ENCODE measurements at regions of chr9 and their contacts with region 1.

Region 1: DNA sequence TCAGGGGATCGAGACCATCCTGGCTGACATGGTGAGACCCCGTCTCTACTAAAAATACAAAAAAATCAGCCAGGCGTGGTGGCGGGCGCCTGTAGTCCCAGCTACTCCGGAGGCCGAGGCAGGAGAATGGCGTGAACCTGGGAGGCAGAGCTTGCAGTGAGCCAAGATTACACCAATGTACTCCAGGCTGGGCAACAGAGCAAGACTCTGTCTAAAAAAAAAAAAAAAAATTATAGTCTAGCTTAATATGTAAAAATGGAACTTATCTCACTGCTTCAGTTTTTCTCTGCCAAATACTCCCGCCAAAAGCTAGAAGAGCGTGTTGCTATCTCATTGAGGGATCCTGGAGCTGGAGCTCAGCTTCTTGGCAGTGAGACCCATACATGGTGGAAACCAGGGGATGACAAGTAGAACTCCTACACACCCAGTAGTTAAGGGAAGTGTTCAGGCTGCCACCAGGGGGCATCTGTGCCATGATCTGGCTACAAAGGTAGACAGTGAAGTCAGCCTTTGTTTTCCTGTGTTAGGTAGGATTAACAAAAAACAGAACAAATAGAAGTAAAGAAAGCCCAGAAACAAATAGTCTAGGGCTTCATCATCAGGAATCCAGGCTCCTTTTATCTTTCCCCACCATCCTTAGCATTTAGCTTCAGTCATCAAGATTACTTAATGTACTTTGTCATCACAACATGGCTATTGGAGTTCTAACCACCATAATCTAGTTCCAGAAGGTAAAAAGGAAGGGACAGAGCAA is 33.6 kb upstream of the GLIPR2 start:
- DNase-seq: peak; percentile 36
- ATAC-seq: peak; percentile 100
- H3K4me3 ChIP-seq: no peak overlapping the region
- H3K27ac ChIP-seq: no peak overlapping the region
- H3K4me1 ChIP-seq: no peaks in the 10 kb centered on the region
- H3K27me3 ChIP-seq: no peaks in the 10 kb centered on the region; a peak in 1 of 4 replicates
- CTCF ChIP-seq: peak; percentile 89 to 92 (median 92)
- EP300 ChIP-seq: no peak
- POLR2A ChIP-seq: no peak
- RAD21 ChIP-seq: peak; percentile 92

Region 2: GRCh38 chr9:35948901-35949318 is 154.0 kb before region 1 on chr9:
- CTCF ChIA-PET with region 1: no interaction called
- POLR2A ChIA-PET with region 1: no interaction called
- RAD21 ChIA-PET with region 1: no interaction called
- SMC1A ChIA-PET with region 1: no interaction called
- in situ Hi-C with region 1: no loop called
- intact Hi-C with region 1: no loop called
- DNase-seq: no peak
- ATAC-seq: no peak
- H3K4me3 ChIP-seq: no peak overlapping the region
- H3K27ac ChIP-seq: no peak overlapping the region
- H3K4me1 ChIP-seq: no peaks in the 10 kb centered on the region
- H3K27me3 ChIP-seq: no peaks in the 10 kb centered on the region
- CTCF ChIP-seq: no peak
- EP300 ChIP-seq: no peak
- POLR2A ChIP-seq: no peak
- RAD21 ChIP-seq: no peak

Region 3: DNA sequence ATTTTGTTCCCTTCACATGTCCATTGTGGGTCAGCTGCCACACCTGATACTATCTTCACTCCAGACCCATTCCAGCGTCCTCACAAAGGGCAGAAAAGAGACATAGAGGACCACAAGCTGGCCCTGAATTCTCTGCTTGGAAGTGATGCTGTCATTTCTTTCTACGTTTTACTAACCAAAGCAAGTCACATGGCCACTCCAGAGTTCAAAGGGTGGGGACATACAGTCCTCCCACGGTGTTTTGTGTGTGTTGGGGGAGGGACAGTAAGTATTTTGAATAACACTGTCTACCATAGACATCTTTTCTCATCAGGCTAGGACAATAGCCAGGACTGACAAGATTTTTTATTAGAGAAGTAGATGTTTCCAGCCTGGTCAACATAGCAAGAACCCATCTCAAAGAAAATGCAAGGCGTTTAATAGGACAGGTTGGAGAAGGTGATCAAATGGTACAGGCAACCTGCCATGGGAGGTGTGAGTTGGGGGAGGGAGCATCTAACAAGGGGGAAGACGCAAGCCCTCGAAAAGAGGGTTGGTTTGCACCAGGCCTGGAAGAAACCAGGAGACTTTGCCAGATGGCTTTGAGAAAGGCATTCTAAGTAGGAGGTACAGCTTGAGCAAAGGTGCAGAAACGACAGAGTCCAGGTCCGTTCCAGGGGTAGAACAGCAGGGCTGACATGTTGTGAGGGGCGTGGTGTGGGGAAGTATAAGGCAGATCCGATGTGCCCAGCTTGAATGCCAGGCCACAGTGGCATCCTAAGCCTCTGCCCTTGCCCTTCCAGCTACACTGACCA is 22.3 kb after region 1 on chr9:
- CTCF ChIA-PET with region 1: interaction called, 88 read pairs
- POLR2A ChIA-PET with region 1: no interaction called
- RAD21 ChIA-PET with region 1: no interaction called
- SMC1A ChIA-PET with region 1: interaction called, 3 read pairs
- in situ Hi-C with region 1: no loop called
- intact Hi-C with region 1: no loop called
- DNase-seq: no peak
- ATAC-seq: no peak
- H3K4me3 ChIP-seq: no peak overlapping the region
- H3K27ac ChIP-seq: no peak overlapping the region
- H3K4me1 ChIP-seq: no peaks in the 10 kb centered on the region; the same call in 1 of the 2 replicates
- H3K27me3 ChIP-seq: peaks cover 0 to 2% of the 10 kb centered on the region in 2 experiments; a peak in 2 of 4 replicates
- CTCF ChIP-seq: no peak
- EP300 ChIP-seq: no peak
- POLR2A ChIP-seq: no peak
- RAD21 ChIP-seq: no peak

Region 4: DNA sequence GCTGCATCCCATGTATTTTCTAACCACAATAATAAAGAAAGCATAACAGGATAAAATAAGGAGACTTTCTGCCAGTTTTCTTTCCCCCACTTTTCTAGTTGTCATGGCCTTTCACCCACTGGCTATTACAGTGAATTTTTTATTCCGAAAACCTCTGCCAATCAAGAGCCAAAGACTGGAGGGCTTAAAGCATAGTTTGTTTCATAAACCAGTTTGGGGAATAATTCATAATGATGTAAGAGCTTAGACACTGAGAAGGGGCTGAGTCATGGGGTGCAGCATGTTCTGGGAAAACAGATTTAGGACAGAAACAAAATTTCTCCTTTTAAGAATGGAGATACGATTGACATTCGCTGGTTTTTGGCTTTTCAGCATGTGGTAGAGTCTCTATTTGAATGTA is 29.2 kb after region 1 on chr9:
- CTCF ChIA-PET with region 1: interaction called, 10 read pairs
- POLR2A ChIA-PET with region 1: no interaction called
- RAD21 ChIA-PET with region 1: no interaction called
- SMC1A ChIA-PET with region 1: no interaction called
- in situ Hi-C with region 1: no loop called
- intact Hi-C with region 1: no loop called
- DNase-seq: no peak
- ATAC-seq: no peak
- H3K4me3 ChIP-seq: no peak overlapping the region
- H3K27ac ChIP-seq: no peak overlapping the region
- H3K4me1 ChIP-seq: peaks cover 8% of the 10 kb centered on the region
- H3K27me3 ChIP-seq: peaks cover 1 to 7% of the 10 kb centered on the region in 2 experiments; a peak in 3 of 4 replicates
- CTCF ChIP-seq: no peak
- EP300 ChIP-seq: no peak
- POLR2A ChIP-seq: no peak
- RAD21 ChIP-seq: no peak

Region 5: DNA sequence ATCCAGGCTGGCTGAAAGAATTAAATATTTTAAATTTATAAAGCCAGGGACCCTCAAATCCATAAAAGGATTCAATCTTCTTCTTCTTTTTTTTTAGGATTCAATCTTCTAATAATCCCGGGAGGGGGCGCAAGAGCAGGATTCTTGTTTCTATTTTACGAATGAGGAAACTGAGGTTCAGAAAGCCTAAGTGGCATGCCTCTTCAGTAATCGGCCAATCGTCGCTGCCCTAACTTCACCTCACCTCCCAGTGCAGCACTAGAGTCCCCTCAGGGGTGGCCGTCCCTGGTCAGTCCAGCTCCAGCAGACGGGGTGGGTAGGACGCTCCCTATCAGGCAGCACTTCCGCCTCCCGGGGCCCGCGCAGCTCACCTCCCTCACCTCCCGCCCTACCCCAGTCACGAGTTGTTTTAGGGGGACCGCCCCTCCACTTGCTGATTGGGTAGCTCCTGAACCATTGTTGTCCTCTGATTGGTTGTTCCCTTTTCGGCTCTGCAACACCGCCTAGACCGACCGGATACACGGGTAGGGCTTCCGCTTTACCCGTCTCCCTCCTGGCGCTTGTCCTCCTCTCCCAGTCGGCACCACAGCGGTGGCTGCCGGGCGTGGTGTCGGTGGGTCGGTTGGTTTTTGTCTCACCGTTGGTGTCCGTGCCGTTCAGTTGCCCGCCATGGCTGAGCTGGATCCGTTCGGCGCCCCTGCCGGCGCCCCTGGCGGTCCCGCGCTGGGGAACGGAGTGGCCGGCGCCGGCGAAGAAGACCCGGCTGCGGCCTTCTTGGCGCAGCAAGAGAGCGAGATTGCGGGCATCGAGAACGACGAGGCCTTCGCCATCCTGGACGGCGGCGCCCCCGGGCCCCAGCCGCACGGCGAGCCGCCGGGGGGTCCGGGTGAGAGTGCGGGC is 87.7 kb after region 1 on chr9 and contains the start of gene CLTA:
- CTCF ChIA-PET with region 1: interaction called, 14 read pairs
- POLR2A ChIA-PET with region 1: no interaction called
- RAD21 ChIA-PET with region 1: interaction called, 3 read pairs
- SMC1A ChIA-PET with region 1: interaction called, 4 read pairs
- in situ Hi-C with region 1: no loop called
- intact Hi-C with region 1: loop called (anchors 1 kb)
- DNase-seq: peak; percentile 97
- ATAC-seq: peak; percentile 98
- H3K4me3 ChIP-seq: peak within 1 kb of the TSS; percentile 86
- H3K27ac ChIP-seq: peak within 1 kb of the TSS; percentile 88
- H3K4me1 ChIP-seq: peaks cover 13% of the 10 kb centered on the region
- H3K27me3 ChIP-seq: no peaks in the 10 kb centered on the region
- CTCF ChIP-seq: peak; percentile 43 to 49 (median 46); a peak in 5 of 6 replicates
- EP300 ChIP-seq: peak in 1 of 2 experiments; percentile 49; a peak in 2 of 4 replicates
- POLR2A ChIP-seq: peak; percentile 100
- RAD21 ChIP-seq: 0 out of 2 replicates have a peak, but pooled peaks have one; percentile 13
- polyA plus RNA-seq, gene CLTA: 49.0 to 103 TPM

Region 6: GRCh38 chr9:36284226-36284625 is 181.3 kb after region 1 on chr9:
- CTCF ChIA-PET with region 1: no interaction called
- POLR2A ChIA-PET with region 1: no interaction called
- RAD21 ChIA-PET with region 1: no interaction called
- SMC1A ChIA-PET with region 1: no interaction called
- in situ Hi-C with region 1: no loop called
- intact Hi-C with region 1: no loop called
- DNase-seq: no peak
- ATAC-seq: no peak
- H3K4me3 ChIP-seq: no peak overlapping the region
- H3K27ac ChIP-seq: no peak overlapping the region
- H3K4me1 ChIP-seq: no peaks in the 10 kb centered on the region
- H3K27me3 ChIP-seq: no peaks in the 10 kb centered on the region
- CTCF ChIP-seq: no peak
- EP300 ChIP-seq: no peak
- POLR2A ChIP-seq: no peak
- RAD21 ChIP-seq: no peak